Left ventricle myocardium inferior (tissue), 1 donor: ENCODE measurements at regions of chr11 and their contacts with region 1.

Region 1: DNA sequence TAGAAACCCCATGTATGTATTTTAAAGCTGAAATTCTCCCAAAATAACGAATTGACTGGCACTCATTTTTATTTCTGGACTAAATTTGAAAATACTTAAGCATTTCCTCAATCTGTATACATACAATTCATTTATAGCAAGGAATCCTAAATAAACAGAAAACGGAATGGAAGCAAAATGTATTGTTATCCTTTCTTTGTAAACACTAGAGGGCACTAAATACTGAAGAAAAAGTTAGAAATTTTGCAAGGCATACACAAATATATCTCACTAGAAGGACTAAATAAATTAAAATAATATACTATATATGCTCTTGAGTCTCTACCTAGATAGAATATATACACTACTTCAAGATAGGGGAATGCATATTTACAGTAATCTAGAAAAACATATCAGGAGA is 23.1 kb upstream of the ANO5 start:
- DNase-seq: no peak
- H3K4me3 ChIP-seq: no peak overlapping the region
- H3K27ac ChIP-seq: no peak overlapping the region
- H3K4me1 ChIP-seq: no peaks in the 10 kb centered on the region
- H3K27me3 ChIP-seq: no peaks in the 10 kb centered on the region
- CTCF ChIP-seq: peak; percentile 53

Region 2: GRCh38 chr11:22304337-22304961 is 134.6 kb after region 1 on chr11:
- intact Hi-C with region 1: loop called (anchors 5 kb)
- DNase-seq: no peak
- H3K4me3 ChIP-seq: no peak overlapping the region
- H3K27ac ChIP-seq: no peak overlapping the region
- H3K4me1 ChIP-seq: no peaks in the 10 kb centered on the region
- H3K27me3 ChIP-seq: peaks cover 30% of the 10 kb centered on the region
- CTCF ChIP-seq: peak; percentile 76